Activated CD8-positive, alpha-beta T cell treated with anti-CD3 and anti-CD28 coated beads for 36 hours (primary cell): ENCODE measurements at regions of chr7 and their contacts with region 1.

Region 1: DNA sequence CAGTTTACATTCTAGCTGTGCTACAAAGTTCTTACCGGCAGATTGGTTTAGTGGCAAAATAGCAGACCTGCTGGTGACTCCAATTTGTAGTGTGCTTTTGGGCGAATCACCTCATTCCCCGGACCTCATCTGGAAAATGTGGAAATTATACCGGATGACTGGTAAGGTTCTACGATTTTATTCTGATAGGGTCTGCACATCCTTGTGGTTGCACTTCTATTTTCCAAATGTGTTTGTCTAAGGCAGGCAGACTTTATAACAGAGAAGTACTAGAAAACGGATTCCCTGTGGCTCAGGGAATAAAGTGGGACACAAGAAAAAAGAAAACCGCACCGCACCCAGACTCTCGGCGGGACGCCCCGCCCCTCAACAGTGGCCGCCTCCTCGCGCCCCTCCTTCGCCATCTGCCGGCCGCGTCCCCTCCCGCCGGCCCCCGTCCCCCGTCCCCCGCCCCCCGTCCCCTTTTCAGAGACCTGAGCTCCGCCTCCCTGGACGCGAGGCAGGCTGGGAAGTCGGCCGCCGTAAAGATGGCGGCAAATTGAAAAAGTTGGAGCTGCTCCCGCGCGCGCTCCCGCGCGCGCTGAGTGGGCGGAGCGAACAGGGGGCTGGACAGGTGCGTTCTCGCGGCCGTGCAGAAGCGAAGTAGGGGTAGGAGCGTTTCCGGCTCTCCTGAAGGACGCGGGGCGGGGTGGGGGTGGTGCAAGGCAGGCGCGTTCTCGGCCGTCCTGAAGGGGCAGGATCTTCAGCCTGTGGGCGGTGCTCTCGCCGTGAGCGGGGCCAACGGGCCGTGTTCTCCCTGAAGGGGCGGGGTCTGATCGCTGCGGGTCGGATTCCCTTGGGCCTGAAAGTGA is 531 bp upstream of the CCM2 start:
- DNase-seq: peak; percentile 100
- ATAC-seq: peak; percentile 90
- H3K4me3 Mint-ChIP-seq: peak overlapping the region; percentile 83
- H3K27ac Mint-ChIP-seq: peak overlapping the region; percentile 93
- H3K4me1 Mint-ChIP-seq: peaks cover 54% of the 10 kb centered on the region
- H3K27me3 Mint-ChIP-seq: no peaks in the 10 kb centered on the region
- CTCF ChIP-seq: no peak

Region 2: GRCh38 chr7:44980393-44981034 is 19.0 kb before region 1 on chr7:
- CTCF ChIA-PET with region 1: interaction called, 23 read pairs
- POLR2A ChIA-PET with region 1: interaction called, 328 read pairs
- intact Hi-C with region 1: loop called (anchors 2 kb)
- DNase-seq: peak; percentile 97
- ATAC-seq: peak; percentile 52
- H3K4me3 Mint-ChIP-seq: peak overlapping the region; percentile 100
- H3K27ac Mint-ChIP-seq: peak overlapping the region; percentile 100
- H3K4me1 Mint-ChIP-seq: peaks cover 60% of the 10 kb centered on the region
- H3K27me3 Mint-ChIP-seq: no peaks in the 10 kb centered on the region
- CTCF ChIP-seq: no peak

Region 3: DNA sequence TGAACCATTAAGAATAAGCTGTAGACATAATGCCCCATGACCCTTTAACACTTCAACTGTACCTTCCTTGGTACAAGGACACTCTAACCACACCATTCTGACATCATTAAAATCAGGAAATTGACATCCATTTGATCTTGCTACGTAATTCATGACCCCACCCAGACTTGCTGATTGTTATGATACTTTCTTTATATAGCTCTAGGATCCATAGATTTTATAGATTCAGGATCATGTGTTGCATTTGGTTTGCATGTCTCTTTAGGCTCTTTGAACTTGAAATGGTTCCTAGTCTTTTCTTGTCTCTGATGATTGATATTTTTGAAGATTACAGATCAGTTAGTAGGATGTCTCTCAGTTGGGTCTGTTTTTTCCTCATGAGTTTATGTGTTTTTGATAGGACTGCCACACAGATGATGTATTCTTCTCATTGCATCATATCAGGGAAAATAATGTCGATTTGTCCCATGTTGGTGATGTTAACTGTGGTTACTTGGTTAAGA is 14.0 kb after region 1 on chr7:
- CTCF ChIA-PET with region 1: interaction called, 5 read pairs
- POLR2A ChIA-PET with region 1: interaction called, 12 read pairs
- intact Hi-C with region 1: no loop called
- DNase-seq: no peak
- ATAC-seq: peak; percentile 20
- H3K4me3 Mint-ChIP-seq: no peak overlapping the region
- H3K27ac Mint-ChIP-seq: no peak overlapping the region
- H3K4me1 Mint-ChIP-seq: peaks cover 40% of the 10 kb centered on the region
- H3K27me3 Mint-ChIP-seq: no peaks in the 10 kb centered on the region
- CTCF ChIP-seq: no peak

Region 4: GRCh38 chr7:45026984-45027773 is 27.7 kb after region 1 on chr7:
- CTCF ChIA-PET with region 1: interaction called, 13 read pairs
- POLR2A ChIA-PET with region 1: interaction called, 46 read pairs
- intact Hi-C with region 1: no loop called
- DNase-seq: peak; percentile 35
- ATAC-seq: peak; percentile 47
- H3K4me3 Mint-ChIP-seq: peak overlapping the region; percentile 75
- H3K27ac Mint-ChIP-seq: peak overlapping the region; percentile 91
- H3K4me1 Mint-ChIP-seq: peaks cover 64% of the 10 kb centered on the region
- H3K27me3 Mint-ChIP-seq: no peaks in the 10 kb centered on the region
- CTCF ChIP-seq: no peak

Region 5: GRCh38 chr7:45111298-45112223 is 112.1 kb after region 1 on chr7 and contains the start of gene TBRG4:
- CTCF ChIA-PET with region 1: interaction called, 3 read pairs
- POLR2A ChIA-PET with region 1: interaction called, 15 read pairs
- intact Hi-C with region 1: no loop called
- DNase-seq: peak; percentile 97
- ATAC-seq: peak; percentile 94
- H3K4me3 Mint-ChIP-seq: peak within 1 kb of the TSS; percentile 90
- H3K27ac Mint-ChIP-seq: peak within 1 kb of the TSS; percentile 95
- H3K4me1 Mint-ChIP-seq: peaks cover 32% of the 10 kb centered on the region
- H3K27me3 Mint-ChIP-seq: no peaks in the 10 kb centered on the region
- CTCF ChIP-seq: no peak
- total RNA-seq, gene TBRG4: 197 TPM